ENCODE measurements at regions of chr1 and their contacts with region 1.

Region 1: GRCh38 chr1:78145105-78145580 is 99.4 kb downstream of the GIPC2 start:
- DNase-seq: peak; percentile 35 to 51
- H3K4me3 ChIP-seq: no peak overlapping the region
- H3K27ac ChIP-seq: no peak overlapping the region
- H3K4me1 ChIP-seq: no peaks in the 10 kb centered on the region
- H3K27me3 ChIP-seq: no peaks in the 10 kb centered on the region
- CTCF ChIP-seq: peak; percentile 98

Region 2: DNA sequence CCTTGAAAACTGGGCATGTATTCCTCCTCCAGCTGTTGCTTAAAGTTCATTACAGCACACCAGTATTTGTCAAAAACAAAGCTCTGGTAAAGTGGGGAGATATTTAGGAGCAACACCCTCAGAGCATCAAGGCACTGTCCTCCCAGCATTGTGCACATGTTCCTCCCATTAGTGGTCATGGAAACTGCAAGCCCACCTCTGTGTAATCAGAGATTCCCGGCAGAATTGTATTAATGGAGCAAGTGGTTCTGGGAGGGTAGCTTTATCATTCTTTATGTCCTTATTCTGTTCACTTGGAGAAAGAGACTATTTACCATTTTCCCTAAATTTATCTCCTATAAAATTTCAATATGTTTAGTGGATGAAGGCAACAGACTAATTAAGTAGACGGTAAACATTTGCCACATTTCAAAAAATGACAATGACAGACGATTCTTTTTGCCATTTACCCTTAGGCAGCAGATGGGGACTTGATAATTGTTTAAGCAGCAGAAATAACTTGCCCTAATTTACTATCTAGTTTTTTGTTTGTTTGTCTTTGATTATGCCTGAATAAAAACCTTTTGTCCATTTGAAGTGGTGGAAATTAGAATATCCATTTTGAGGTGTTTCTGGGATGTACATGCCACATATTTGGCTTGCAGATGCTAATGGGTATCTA is 1567.5 kb before region 1 on chr1:
- CTCF ChIA-PET with region 1: no interaction called
- POLR2A ChIA-PET with region 1: no interaction called
- intact Hi-C with region 1: no loop called
- DNase-seq: no peak
- H3K4me3 ChIP-seq: no peak overlapping the region
- H3K27ac ChIP-seq: no peak overlapping the region
- H3K4me1 ChIP-seq: no peaks in the 10 kb centered on the region
- H3K27me3 ChIP-seq: no peaks in the 10 kb centered on the region
- CTCF ChIP-seq: no peak

Region 3: DNA sequence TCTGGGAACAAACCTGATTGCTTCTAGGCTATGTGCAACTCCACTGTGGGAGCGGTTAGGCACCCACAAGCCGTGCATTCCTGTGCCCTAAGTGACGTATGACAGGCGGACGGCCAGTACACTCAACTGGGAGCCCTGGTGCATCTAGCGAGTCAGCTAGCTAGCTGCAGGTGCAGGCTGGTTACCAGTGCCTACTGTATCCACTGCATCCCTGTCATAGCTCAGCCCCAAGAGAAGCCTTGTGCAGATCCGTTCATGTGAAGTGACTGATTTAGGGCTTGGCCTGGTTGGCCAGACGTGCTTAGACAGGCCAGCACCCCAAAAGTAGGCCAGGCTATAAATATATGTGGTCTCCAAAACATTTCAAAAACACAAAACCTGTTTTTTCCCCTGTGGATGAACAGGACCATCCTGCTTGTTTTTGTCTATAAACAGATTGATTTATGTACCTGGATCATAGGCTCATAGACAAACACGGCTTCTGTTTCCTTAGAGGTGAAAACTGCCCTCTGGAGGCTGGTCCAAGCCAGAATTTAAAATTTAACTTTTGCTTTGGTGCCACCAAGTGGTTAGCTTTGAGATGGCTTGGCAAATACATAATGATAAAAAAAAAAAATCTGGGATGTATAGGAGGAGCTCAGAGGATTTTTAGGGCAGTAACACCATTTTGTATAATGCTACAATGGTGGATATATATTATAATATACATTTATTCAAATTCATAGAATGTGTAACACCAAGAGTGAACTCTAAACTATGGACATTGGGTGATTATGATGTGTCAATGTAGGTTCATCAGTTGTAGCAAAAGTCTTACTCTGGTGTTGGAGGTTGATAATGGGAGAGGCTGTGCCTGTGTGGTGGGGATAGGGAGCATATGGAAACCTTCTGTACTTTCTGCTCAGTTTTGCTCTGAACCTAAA is 30.8 kb before region 1 on chr1:
- CTCF ChIA-PET with region 1: no interaction called
- POLR2A ChIA-PET with region 1: no interaction called
- intact Hi-C with region 1: no loop called
- DNase-seq: peak; percentile 64 to 72
- H3K4me3 ChIP-seq: no peak overlapping the region
- H3K27ac ChIP-seq: no peak overlapping the region
- H3K4me1 ChIP-seq: no peaks in the 10 kb centered on the region
- H3K27me3 ChIP-seq: no peaks in the 10 kb centered on the region
- CTCF ChIP-seq: peak; percentile 92

Region 4: GRCh38 chr1:78333502-78333901 is 188.4 kb after region 1 on chr1:
- CTCF ChIA-PET with region 1: no interaction called
- POLR2A ChIA-PET with region 1: no interaction called
- intact Hi-C with region 1: loop called (anchors 10 kb)
- DNase-seq: no peak
- H3K4me3 ChIP-seq: no peak overlapping the region
- H3K27ac ChIP-seq: no peak overlapping the region
- H3K4me1 ChIP-seq: no peaks in the 10 kb centered on the region
- H3K27me3 ChIP-seq: no peaks in the 10 kb centered on the region
- CTCF ChIP-seq: peak; percentile 77

Region 5: GRCh38 chr1:78607334-78607927 is 462.3 kb after region 1 on chr1:
- CTCF ChIA-PET with region 1: no interaction called
- POLR2A ChIA-PET with region 1: no interaction called
- intact Hi-C with region 1: loop called (anchors 1 kb)
- DNase-seq: no peak
- H3K4me3 ChIP-seq: no peak overlapping the region
- H3K27ac ChIP-seq: no peak overlapping the region
- H3K4me1 ChIP-seq: no peaks in the 10 kb centered on the region
- H3K27me3 ChIP-seq: no peaks in the 10 kb centered on the region
- CTCF ChIP-seq: peak; percentile 83

Measured in PC-9 (cell line).